Tibial artery (tissue), 4 donors: ENCODE measurements at regions of chr1 and their contacts with region 1.

Region 1: GRCh38 chr1:19754482-19754881 is 45.2 kb downstream of the TMCO4 start:
- DNase-seq: peak; percentile 38 to 90
- H3K4me3 ChIP-seq: no peak overlapping the region
- H3K27ac ChIP-seq: peak overlapping the region; percentile 77 to 85
- H3K4me1 ChIP-seq: peaks cover 0 to 44% (median 14%) of the 10 kb centered on the region in 4 donors
- H3K27me3 ChIP-seq: no peaks in the 10 kb centered on the region
- CTCF ChIP-seq: no peak

Region 2: DNA sequence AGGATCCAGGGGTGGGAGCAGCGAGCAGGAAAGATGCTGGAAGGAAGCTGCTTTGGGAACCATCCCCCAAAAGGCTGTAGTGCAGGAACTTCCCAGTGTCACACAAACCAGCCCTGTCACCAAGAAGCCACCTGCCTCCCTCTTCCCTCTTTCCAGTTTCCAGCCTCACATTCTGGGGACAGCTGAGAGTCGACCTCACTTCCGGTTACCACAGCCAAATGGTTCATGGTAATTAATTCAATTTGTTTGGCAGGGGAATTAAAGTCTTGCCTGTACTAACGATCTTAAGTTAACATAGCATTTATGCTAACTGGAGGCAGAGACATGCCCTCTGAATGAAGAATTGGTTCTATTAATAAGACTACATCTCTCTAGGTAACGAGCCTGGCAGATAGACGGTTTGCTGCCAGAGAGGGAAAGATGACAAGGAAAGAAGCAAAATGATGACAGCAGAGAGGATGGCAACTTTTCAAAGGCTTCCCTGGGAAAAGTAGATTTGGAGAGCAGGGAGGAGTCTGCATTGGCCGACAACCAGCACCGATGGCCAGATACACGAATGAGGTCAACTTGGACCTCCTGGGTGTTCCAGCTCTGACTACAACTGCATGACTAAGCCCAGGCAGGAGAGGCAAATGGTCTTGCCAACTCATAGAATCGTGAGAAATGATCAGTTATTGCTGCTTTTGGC is 18.9 kb before region 1 on chr1:
- intact Hi-C with region 1: loop called (anchors 2 kb)
- DNase-seq: peak; percentile 86 to 94
- H3K4me3 ChIP-seq: no peak overlapping the region
- H3K27ac ChIP-seq: peak overlapping the region; percentile 81 to 85
- H3K4me1 ChIP-seq: peaks cover 0 to 56% (median 41%) of the 10 kb centered on the region in 4 donors
- H3K27me3 ChIP-seq: no peaks in the 10 kb centered on the region
- CTCF ChIP-seq: no peak